ENCODE measurements at regions of chr5 and their contacts with region 1.

Region 1: DNA sequence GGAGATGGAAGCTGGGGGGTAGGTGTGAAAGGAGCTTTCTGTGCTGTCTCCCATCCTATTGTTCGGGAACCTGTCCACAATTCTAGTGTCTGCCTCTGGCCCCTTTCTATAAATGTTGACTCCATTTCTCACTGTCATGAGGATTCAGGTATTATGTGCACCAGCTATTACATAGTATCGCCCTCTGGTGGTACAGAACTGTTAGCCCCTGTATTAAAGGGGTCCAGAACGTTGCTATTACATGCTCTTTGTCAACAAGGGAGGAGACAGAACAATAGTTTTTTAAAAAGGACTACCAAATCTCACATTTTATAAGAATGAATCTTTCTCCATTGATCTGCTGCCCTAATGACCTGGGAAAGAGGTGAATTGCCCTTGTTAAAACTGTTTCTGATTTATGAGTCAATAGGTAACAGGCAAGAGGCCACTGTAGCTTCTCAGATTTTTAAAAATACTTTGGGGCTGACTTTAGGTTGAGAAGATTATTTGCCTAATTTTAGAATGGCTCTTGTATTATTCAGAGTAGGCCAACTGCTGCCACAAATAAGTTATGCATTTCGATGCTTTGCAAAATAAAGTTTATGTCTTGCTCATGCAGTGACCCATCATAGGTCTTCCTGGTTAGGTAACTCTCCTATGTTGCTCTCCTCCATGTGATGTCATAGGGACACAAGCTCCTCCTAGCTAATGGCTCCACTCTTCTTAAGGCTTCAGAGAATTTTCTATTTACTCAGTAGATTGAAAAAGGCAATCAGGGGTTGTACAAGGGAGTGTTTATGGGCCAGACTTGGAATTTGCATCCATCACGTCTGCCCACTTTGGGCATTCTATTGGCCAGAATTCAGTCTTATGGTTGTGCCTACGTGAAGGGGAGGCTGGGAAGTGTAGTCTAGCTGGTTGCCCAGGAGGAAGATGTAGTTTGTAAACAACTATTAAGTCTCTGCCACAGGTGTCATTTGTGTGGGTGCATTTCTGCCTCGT is 20.8 kb downstream of the DCANP1 start:
- DNase-seq: peak; percentile 14
- H3K4me3 Mint-ChIP-seq: no peak overlapping the region
- H3K27ac Mint-ChIP-seq: peak overlapping the region; percentile 36
- H3K4me1 Mint-ChIP-seq: peaks cover 15% of the 10 kb centered on the region
- H3K27me3 Mint-ChIP-seq: peaks cover 7% of the 10 kb centered on the region

Region 2: GRCh38 chr5:135364421-135365262 is 61.8 kb before region 1 on chr5:
- intact Hi-C with region 1: loop called (anchors 5 kb)
- DNase-seq: no peak
- H3K4me3 Mint-ChIP-seq: no peak overlapping the region
- H3K27ac Mint-ChIP-seq: no peak overlapping the region
- H3K4me1 Mint-ChIP-seq: peaks cover 47% of the 10 kb centered on the region
- H3K27me3 Mint-ChIP-seq: no peaks in the 10 kb centered on the region

Region 3: DNA sequence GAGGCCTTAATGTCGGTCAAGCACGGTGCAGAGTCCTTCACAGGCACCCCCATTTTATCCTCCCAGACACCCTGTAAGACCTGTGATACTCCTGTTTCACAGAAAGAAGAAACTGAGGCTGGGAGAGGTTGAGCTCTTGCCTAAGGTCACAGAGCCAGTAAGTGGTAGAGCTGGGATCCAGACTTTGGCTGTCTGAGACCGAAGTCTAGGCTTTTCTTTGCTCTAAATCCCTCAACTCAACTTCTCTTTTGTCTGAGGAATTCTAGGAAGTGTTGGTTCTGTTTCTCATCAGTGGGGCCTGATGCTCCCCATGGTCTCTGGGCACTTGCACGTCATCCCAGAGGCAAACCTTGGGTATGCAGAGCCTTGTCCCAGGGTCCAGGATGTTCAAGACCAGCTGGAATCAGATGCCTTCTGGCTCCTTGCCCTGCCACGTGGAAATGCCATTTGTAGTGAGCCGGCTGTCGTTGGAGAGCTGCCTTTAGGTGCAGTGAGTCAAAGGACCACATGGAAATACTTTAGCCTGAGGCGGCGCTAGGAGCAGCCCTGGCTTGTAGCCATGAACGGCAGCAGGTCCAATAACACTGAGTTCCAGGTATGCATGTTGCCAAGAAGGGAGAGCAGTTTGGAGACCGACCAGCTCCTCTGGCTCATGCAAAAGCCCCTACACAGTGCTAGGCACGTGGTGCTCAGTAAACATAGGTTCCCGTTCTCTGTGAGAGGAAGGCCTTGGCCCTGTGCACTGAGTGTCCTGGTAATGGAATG is 11.6 kb after region 1 on chr5:
- intact Hi-C with region 1: no loop called
- DNase-seq: no peak
- H3K4me3 Mint-ChIP-seq: no peak overlapping the region
- H3K27ac Mint-ChIP-seq: no peak overlapping the region
- H3K4me1 Mint-ChIP-seq: no peaks in the 10 kb centered on the region
- H3K27me3 Mint-ChIP-seq: peaks cover 12% of the 10 kb centered on the region

Measured in activated T-helper 1 cell treated with anti-CD3 and anti-CD28 coated beads, Interleukin-12 subunit alpha, Interleukin-12 subunit beta, Interleukin-2, Interleukin-4 antibody, amounts not matched to agents 30 ng/mL and 10 ng/mL and 1 ng/mL, durations not matched to agents 14 hours and 24 hours and 36 hours (primary cell).